Activated CD4-positive, alpha-beta memory T cell treated with anti-CD3 and anti-CD28 coated beads for 36 hours (primary cell): ENCODE measurements at regions of chr22 and their contacts with region 1.

Region 1: GRCh38 chr22:30289134-30289979 is at the start of gene CASTOR1:
- DNase-seq: peak; percentile 94
- H3K4me3 Mint-ChIP-seq: peak within 1 kb of the TSS; percentile 76
- H3K27ac Mint-ChIP-seq: peak within 1 kb of the TSS; percentile 69
- H3K4me1 Mint-ChIP-seq: peaks cover 22% of the 10 kb centered on the region
- H3K27me3 Mint-ChIP-seq: no peaks in the 10 kb centered on the region
- total RNA-seq, gene CASTOR1: 3.6 to 4.0 TPM

Region 2: GRCh38 chr22:29798801-29799680 is 490.3 kb before region 1 on chr22:
- CTCF ChIA-PET with region 1: no interaction called
- POLR2A ChIA-PET with region 1: no interaction called
- intact Hi-C with region 1: no loop called
- DNase-seq: no peak
- H3K4me3 Mint-ChIP-seq: no peak overlapping the region
- H3K27ac Mint-ChIP-seq: no peak overlapping the region
- H3K4me1 Mint-ChIP-seq: no peaks in the 10 kb centered on the region
- H3K27me3 Mint-ChIP-seq: no peaks in the 10 kb centered on the region

Region 3: GRCh38 chr22:30116362-30117117 is 172.8 kb before region 1 on chr22:
- CTCF ChIA-PET with region 1: interaction called, 13 read pairs
- POLR2A ChIA-PET with region 1: no interaction called
- intact Hi-C with region 1: no loop called
- DNase-seq: no peak
- H3K4me3 Mint-ChIP-seq: no peak overlapping the region
- H3K27ac Mint-ChIP-seq: no peak overlapping the region
- H3K4me1 Mint-ChIP-seq: peaks cover 15% of the 10 kb centered on the region
- H3K27me3 Mint-ChIP-seq: no peaks in the 10 kb centered on the region

Region 4: DNA sequence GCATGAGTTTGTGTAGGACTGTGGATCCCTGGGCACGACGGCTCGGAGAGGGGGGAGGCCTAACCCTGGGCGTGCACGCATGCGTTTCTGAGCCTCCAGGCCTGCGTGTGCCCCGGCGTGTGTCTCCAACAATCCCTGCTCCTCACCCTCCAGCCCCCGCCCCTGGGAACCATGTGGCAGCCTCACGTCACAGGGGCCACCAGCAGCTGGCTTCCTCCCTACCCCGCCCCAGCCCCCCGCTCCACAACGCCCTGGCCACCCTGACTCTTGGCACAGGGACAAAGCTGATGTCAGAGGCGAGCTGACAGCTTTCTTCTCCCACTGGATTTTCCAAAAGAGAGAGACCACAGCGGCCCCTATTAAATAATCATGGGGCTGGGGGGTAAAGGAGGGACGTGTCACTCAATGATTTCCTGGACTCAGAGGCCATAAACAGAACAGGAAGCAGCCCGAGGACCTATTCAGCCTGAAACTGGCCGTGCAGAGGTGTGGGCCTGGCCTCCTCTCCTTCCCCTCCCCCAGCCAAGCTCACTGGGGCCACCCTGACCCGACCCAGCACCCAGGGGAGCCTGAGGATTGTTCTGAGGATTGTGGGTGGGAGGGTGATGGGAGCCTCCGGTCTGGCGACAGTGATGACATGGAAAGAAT is 36.0 kb before region 1 on chr22:
- CTCF ChIA-PET with region 1: interaction called, 38 read pairs
- POLR2A ChIA-PET with region 1: no interaction called
- intact Hi-C with region 1: loop called (anchors 1 kb)
- DNase-seq: no peak
- H3K4me3 Mint-ChIP-seq: no peak overlapping the region
- H3K27ac Mint-ChIP-seq: no peak overlapping the region
- H3K4me1 Mint-ChIP-seq: peaks cover 26% of the 10 kb centered on the region
- H3K27me3 Mint-ChIP-seq: no peaks in the 10 kb centered on the region

Region 5: DNA sequence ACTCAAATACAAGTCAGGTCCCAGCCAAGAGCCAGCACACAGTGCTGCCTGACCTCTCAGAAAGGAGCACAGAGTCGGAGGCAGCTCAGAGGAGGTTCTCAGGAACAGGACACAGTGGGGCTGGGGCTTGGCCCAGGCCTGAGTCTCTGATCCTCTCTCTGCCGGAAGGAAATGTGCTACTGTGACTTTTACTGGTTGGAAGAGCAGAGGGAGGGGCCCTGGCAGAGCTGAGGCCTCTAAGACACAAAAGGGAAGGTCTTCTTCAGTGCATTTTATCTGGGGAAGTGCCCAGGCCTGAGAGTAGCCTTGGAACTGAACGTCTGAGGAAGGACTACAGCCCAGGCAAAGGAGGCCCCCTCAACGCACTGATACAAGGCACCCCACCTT is 16.2 kb after region 1 on chr22:
- CTCF ChIA-PET with region 1: interaction called, 25 read pairs
- POLR2A ChIA-PET with region 1: interaction called, 11 read pairs
- intact Hi-C with region 1: loop called (anchors 1 kb)
- DNase-seq: peak; percentile 74
- H3K4me3 Mint-ChIP-seq: peak overlapping the region; percentile 69
- H3K27ac Mint-ChIP-seq: peak overlapping the region; percentile 98
- H3K4me1 Mint-ChIP-seq: peaks cover 96% of the 10 kb centered on the region
- H3K27me3 Mint-ChIP-seq: no peaks in the 10 kb centered on the region

Region 6: GRCh38 chr22:30336752-30337460 is 47.5 kb after region 1 on chr22:
- CTCF ChIA-PET with region 1: interaction called, 25 read pairs
- POLR2A ChIA-PET with region 1: no interaction called
- intact Hi-C with region 1: no loop called
- DNase-seq: no peak
- H3K4me3 Mint-ChIP-seq: no peak overlapping the region
- H3K27ac Mint-ChIP-seq: peak overlapping the region; percentile 54
- H3K4me1 Mint-ChIP-seq: peaks cover 41% of the 10 kb centered on the region
- H3K27me3 Mint-ChIP-seq: no peaks in the 10 kb centered on the region

Region 7: GRCh38 chr22:30381264-30381663 is 91.9 kb after region 1 on chr22:
- CTCF ChIA-PET with region 1: interaction called, 414 read pairs
- POLR2A ChIA-PET with region 1: interaction called, 31 read pairs
- intact Hi-C with region 1: no loop called
- DNase-seq: peak; percentile 42
- H3K4me3 Mint-ChIP-seq: no peak overlapping the region
- H3K27ac Mint-ChIP-seq: no peak overlapping the region
- H3K4me1 Mint-ChIP-seq: peaks cover 2% of the 10 kb centered on the region
- H3K27me3 Mint-ChIP-seq: no peaks in the 10 kb centered on the region

Region 8: GRCh38 chr22:30423982-30424963 is 134.9 kb after region 1 on chr22:
- CTCF ChIA-PET with region 1: interaction called, 55 read pairs
- POLR2A ChIA-PET with region 1: interaction called, 5 read pairs
- intact Hi-C with region 1: loop called (anchors 1 kb)
- DNase-seq: peak; percentile 99
- H3K4me3 Mint-ChIP-seq: peak overlapping the region; percentile 90
- H3K27ac Mint-ChIP-seq: peak overlapping the region; percentile 95
- H3K4me1 Mint-ChIP-seq: peaks cover 58% of the 10 kb centered on the region
- H3K27me3 Mint-ChIP-seq: no peaks in the 10 kb centered on the region